ENCODE measurements at regions of chr5 and their contacts with region 1.

Region 1: GRCh38 chr5:123423278-123424149 is at the start of gene CEP120:
- DNase-seq: peak; percentile 98
- H3K4me3 Mint-ChIP-seq: no peak within 1 kb of the TSS
- H3K27ac Mint-ChIP-seq: no peak within 1 kb of the TSS
- H3K4me1 Mint-ChIP-seq: peaks cover 24% of the 10 kb centered on the region
- H3K27me3 Mint-ChIP-seq: no peaks in the 10 kb centered on the region
- total RNA-seq, gene CEP120: 35.2 to 36.6 TPM

Region 2: DNA sequence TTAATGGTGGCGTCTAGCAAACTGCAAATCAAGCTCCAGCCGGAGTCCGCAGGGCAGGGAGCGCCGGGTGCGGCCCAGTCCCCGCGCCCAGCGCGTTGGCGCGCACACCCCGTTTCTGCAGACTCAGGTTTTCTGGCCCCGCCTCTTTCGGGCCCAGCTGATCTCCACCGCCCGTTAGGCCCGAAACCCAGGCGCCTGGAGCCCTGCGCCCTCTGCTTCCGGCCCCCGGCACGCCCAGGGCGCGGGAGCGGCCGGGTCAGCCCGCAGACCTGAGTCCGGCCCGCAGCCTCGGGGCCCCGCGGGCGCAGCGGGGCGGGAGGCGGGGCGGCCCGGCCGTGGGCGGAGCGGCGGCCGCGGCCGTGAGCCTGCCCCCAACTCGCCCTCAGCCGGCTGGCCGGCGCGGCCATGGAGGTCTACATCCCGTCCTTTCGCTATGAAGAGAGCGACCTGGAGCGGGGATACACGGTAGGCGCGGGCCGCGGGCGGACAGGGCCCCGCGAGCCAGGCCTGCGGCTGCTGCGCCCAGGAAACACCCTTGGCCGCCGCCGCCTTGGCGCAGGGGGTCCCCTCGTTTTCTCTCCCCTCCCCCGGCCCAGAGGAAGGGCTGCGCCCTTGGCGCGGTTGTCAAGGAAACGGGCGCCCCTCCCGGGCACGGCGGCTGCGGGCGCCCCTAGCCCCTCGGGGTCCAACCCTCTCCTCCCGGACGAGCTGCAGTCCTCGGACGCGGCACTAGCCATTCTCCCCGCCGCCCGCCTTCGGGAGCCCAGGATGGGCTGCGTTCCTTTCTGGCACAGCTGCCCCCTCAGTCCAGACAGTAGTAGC is 578.1 kb before region 1 on chr5 and contains the start of gene SNX24:
- CTCF ChIA-PET with region 1: interaction called, 4 read pairs
- POLR2A ChIA-PET with region 1: interaction called, 18 read pairs
- DNase-seq: peak; percentile 82
- H3K4me3 Mint-ChIP-seq: peak within 1 kb of the TSS; percentile 78
- H3K27ac Mint-ChIP-seq: peak within 1 kb of the TSS; percentile 28
- H3K4me1 Mint-ChIP-seq: peaks cover 36% of the 10 kb centered on the region
- H3K27me3 Mint-ChIP-seq: peaks cover 3% of the 10 kb centered on the region
- total RNA-seq, gene SNX24: 8.8 to 9.2 TPM

Region 3: GRCh38 chr5:122937914-122938313 is 485.6 kb before region 1 on chr5:
- CTCF ChIA-PET with region 1: no interaction called
- POLR2A ChIA-PET with region 1: no interaction called
- DNase-seq: no peak
- H3K4me3 Mint-ChIP-seq: no peak overlapping the region
- H3K27ac Mint-ChIP-seq: no peak overlapping the region
- H3K4me1 Mint-ChIP-seq: peaks cover under 1% of the 10 kb centered on the region
- H3K27me3 Mint-ChIP-seq: no peaks in the 10 kb centered on the region

Region 4: DNA sequence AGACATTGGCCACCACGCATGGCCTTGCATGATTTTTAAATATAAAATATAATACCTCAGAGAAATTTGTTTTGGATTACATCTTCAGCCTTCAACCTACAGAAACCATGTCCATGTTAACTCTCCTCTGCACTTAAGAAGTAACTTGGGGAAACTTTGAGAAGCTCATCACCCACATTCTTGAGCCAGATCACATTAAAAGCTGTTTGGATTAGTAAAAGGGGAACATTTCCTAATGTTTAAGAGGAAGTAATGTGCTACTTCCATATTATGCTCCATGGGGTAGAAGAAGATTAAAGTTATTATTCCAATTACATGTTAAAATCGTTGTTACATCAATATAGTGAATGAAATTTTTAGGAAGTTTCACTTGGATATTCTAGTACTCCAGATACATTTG is 10.1 kb after region 1 on chr5:
- CTCF ChIA-PET with region 1: interaction called, 9 read pairs
- POLR2A ChIA-PET with region 1: interaction called, 24 read pairs
- DNase-seq: no peak
- H3K4me3 Mint-ChIP-seq: no peak overlapping the region
- H3K27ac Mint-ChIP-seq: no peak overlapping the region
- H3K4me1 Mint-ChIP-seq: peaks cover 5% of the 10 kb centered on the region
- H3K27me3 Mint-ChIP-seq: peaks cover 2% of the 10 kb centered on the region

Region 5: GRCh38 chr5:123448017-123448617 is 24.6 kb after region 1 on chr5:
- CTCF ChIA-PET with region 1: interaction called, 26 read pairs
- POLR2A ChIA-PET with region 1: interaction called, 31 read pairs
- DNase-seq: no peak
- H3K4me3 Mint-ChIP-seq: no peak overlapping the region
- H3K27ac Mint-ChIP-seq: no peak overlapping the region
- H3K4me1 Mint-ChIP-seq: peaks cover 24% of the 10 kb centered on the region
- H3K27me3 Mint-ChIP-seq: peaks cover 18% of the 10 kb centered on the region

Region 6: GRCh38 chr5:123511648-123512605 is 88.4 kb after region 1 on chr5 and contains the start of gene CSNK1G3:
- CTCF ChIA-PET with region 1: interaction called, 13 read pairs
- POLR2A ChIA-PET with region 1: interaction called, 102 read pairs
- DNase-seq: peak; percentile 95
- H3K4me3 Mint-ChIP-seq: peak within 1 kb of the TSS; percentile 96
- H3K27ac Mint-ChIP-seq: peak within 1 kb of the TSS; percentile 87
- H3K4me1 Mint-ChIP-seq: peaks cover 45% of the 10 kb centered on the region
- H3K27me3 Mint-ChIP-seq: peaks cover 12% of the 10 kb centered on the region
- total RNA-seq, gene CSNK1G3: 30.8 to 32.1 TPM

Region 7: GRCh38 chr5:123545506-123545905 is 122.0 kb after region 1 on chr5:
- CTCF ChIA-PET with region 1: interaction called, 11 read pairs
- POLR2A ChIA-PET with region 1: interaction called, 19 read pairs
- DNase-seq: no peak
- H3K4me3 Mint-ChIP-seq: no peak overlapping the region
- H3K27ac Mint-ChIP-seq: no peak overlapping the region
- H3K4me1 Mint-ChIP-seq: peaks cover 37% of the 10 kb centered on the region
- H3K27me3 Mint-ChIP-seq: no peaks in the 10 kb centered on the region

Region 8: DNA sequence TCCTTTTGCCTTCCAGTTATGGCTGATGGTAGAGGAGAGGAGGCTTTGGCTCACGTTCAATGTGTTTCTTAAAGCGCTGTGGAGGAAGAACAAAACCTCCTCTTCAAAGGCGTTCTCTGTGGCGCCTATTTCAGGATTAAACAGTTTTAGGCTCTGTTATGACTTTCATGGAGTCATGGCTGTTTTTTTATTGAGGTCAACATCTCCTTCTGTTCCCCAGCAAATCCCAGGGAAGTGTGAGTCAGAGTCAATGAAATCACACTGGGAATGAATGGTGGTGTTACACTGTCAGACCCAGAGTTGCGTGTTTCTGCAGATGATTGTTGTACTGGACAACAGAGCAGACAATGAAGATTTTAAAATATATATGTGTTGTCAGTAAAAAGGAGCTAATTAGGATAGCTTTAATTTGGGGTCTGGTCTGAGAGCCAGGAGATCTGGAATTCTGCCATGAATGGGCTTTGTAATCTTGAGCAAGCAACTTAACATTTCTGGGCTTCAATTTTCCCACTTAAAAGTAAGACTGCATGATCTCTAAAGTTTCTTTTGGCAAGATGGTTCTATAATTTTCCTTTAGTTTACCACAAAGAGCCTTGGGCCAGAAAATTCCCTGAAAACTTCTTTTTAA is 329.2 kb after region 1 on chr5:
- CTCF ChIA-PET with region 1: no interaction called
- POLR2A ChIA-PET with region 1: no interaction called
- DNase-seq: no peak
- H3K4me3 Mint-ChIP-seq: no peak overlapping the region
- H3K27ac Mint-ChIP-seq: no peak overlapping the region
- H3K4me1 Mint-ChIP-seq: no peaks in the 10 kb centered on the region
- H3K27me3 Mint-ChIP-seq: no peaks in the 10 kb centered on the region